Activated naive CD4-positive, alpha-beta T cell treated with anti-CD3 and anti-CD28 coated beads for 36 hours (primary cell): ENCODE measurements at regions of chr5 and their contacts with region 1.

Region 1: GRCh38 chr5:136249678-136250266 is 56.8 kb upstream of the SMIM32 start:
- DNase-seq: peak; percentile 23
- H3K4me3 Mint-ChIP-seq: no peak overlapping the region
- H3K27ac Mint-ChIP-seq: no peak overlapping the region
- H3K4me1 Mint-ChIP-seq: no peaks in the 10 kb centered on the region
- H3K27me3 Mint-ChIP-seq: peaks cover 4% of the 10 kb centered on the region

Region 2: DNA sequence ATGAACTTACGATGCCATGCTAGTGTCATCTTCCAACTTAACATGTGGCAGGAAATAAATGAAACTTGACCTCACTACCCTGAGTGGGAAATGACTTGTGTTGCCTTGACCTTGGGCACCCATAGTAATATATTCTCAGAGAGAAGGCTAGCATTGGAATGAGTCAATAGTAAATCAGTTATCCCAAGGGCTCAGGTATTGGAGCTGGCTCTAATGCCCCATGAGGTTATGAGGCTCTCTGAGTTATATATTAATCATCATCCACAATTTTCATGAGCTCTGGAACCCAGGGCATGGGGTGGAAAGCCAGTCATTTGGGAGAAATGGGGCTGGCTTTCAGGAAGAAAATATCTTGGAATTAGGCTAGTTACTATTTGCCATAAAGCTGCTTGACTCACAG is 14.5 kb before region 1 on chr5:
- CTCF ChIA-PET with region 1: no interaction called
- intact Hi-C with region 1: no loop called
- DNase-seq: no peak
- H3K4me3 Mint-ChIP-seq: no peak overlapping the region
- H3K27ac Mint-ChIP-seq: no peak overlapping the region
- H3K4me1 Mint-ChIP-seq: no peaks in the 10 kb centered on the region
- H3K27me3 Mint-ChIP-seq: peaks cover 3% of the 10 kb centered on the region

Region 3: DNA sequence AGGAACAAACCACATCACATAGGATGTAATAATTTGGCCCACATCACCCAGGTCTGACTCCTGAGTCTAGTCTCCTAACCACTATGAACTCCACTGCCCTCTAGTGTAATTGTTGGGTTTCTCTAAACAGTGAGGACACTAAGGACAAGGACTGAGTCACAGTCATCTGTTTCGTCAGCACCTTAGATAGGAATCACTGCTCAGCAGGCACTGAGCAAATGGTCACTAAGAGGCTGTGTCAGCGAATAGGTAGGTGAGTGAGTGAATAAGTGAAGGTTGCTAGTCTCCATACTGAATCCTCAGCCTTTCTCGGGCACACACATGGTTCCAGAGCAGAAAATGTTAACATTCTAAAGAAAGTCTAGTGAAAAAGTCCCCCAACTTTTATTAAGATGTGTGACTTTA is 970.8 kb after region 1 on chr5:
- CTCF ChIA-PET with region 1: no interaction called
- intact Hi-C with region 1: loop called (anchors 10 kb)
- DNase-seq: no peak
- H3K4me3 Mint-ChIP-seq: no peak overlapping the region
- H3K27ac Mint-ChIP-seq: no peak overlapping the region
- H3K4me1 Mint-ChIP-seq: no peaks in the 10 kb centered on the region
- H3K27me3 Mint-ChIP-seq: peaks cover 6% of the 10 kb centered on the region